H1 (cell line): ENCODE measurements at regions of chr11 and their contacts with region 1.

Region 1: GRCh38 chr11:19742588-19743292 is 30.1 kb downstream of the NAV2 start:
- DNase-seq: peak; percentile 49 to 84
- H3K4me3 ChIP-seq: no peak overlapping the region
- H3K27ac ChIP-seq: no peak overlapping the region
- H3K4me1 ChIP-seq: peaks cover 0 to 12% (median 3%) of the 10 kb centered on the region in 4 experiments; a peak in 2 of 7 replicates
- H3K27me3 ChIP-seq: no peaks in the 10 kb centered on the region
- CTCF ChIP-seq: peak; percentile 76 to 97 (median 91)
- EP300 ChIP-seq: no peak
- POLR2A ChIP-seq: no peak
- RAD21 ChIP-seq: peak; percentile 93 to 97

Region 2: DNA sequence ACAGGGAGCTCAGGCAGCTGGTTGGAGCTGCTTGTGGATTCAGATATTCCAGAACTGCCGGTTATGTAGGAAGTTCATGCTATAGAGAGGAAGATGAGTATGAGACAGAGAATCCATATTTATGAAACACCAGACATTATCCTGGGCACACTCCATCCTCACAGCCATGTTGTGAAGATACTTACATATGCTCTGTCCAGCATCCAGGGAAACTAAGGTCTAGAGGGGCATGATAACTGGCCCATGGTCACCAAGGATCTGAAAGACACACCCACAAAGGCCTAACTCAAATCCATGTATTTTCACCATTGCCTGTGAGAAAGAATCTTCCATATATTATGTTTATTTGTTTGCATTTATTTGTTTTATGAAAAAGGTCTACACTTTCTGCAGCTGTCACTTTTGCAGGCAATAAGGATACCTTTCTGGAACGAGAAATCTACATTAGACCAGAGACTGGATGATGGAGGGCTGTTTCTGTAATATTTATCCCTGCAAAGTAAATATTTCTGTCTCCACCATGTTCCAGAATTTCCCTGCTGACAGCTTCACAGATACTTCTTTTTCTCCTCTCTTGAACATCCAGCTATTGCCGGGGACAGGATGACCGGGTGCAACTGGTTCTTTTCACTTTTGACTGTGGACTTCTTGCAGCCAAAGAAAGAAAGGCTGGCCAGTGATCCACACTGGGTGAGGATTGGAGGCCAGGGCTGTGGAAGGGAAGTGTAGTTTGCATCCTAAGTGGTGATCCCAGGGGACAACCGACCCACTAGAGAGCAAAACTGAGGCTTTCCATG is 176.0 kb before region 1 on chr11:
- CTCF ChIA-PET with region 1: interaction called, 104 read pairs
- POLR2A ChIA-PET with region 1: no interaction called
- DNase-seq: no peak
- H3K4me3 ChIP-seq: no peak overlapping the region
- H3K27ac ChIP-seq: no peak overlapping the region
- H3K4me1 ChIP-seq: no peaks in the 10 kb centered on the region
- H3K27me3 ChIP-seq: no peaks in the 10 kb centered on the region; a peak in 1 of 7 replicates
- CTCF ChIP-seq: no peak
- EP300 ChIP-seq: no peak
- POLR2A ChIP-seq: no peak
- RAD21 ChIP-seq: no peak

Region 3: DNA sequence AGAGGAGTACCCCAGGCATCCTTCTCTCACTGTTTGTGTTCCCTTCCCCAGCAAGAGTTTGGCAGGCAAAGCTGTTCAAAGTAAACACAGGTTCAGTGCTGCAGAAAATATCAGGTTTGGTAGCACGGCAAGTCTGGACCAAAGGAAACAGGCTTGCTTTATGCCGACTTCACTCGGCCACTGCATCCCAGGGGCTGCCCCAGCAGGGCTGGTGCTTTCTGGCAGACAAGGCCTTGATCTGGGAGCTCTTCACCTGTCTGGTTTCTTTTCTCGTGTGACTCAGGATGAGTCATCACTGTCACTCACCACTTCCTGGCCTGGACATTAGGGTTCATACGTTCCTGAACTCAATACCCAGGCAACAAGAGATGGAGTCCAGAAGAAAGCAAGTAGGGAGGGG is 82.7 kb before region 1 on chr11:
- CTCF ChIA-PET with region 1: interaction called, 24 read pairs
- POLR2A ChIA-PET with region 1: no interaction called
- DNase-seq: no peak
- H3K4me3 ChIP-seq: no peak overlapping the region
- H3K27ac ChIP-seq: no peak overlapping the region
- H3K4me1 ChIP-seq: no peaks in the 10 kb centered on the region
- H3K27me3 ChIP-seq: no peaks in the 10 kb centered on the region
- CTCF ChIP-seq: no peak
- EP300 ChIP-seq: no peak
- POLR2A ChIP-seq: no peak
- RAD21 ChIP-seq: no peak

Region 4: GRCh38 chr11:19712281-19713220 is 30.2 kb before region 1 on chr11 and contains the start of gene NAV2:
- CTCF ChIA-PET with region 1: interaction called, 27 read pairs
- POLR2A ChIA-PET with region 1: no interaction called
- DNase-seq: peak; percentile 80 to 92
- H3K4me3 ChIP-seq: peak within 1 kb of the TSS; percentile 48 to 65 (median 54)
- H3K27ac ChIP-seq: peak within 1 kb of the TSS; percentile 69; the same call in 1 of the 2 replicates
- H3K4me1 ChIP-seq: peaks cover 0 to 13% (median 10%) of the 10 kb centered on the region in 4 experiments; a peak in 6 of 7 replicates
- H3K27me3 ChIP-seq: peaks cover 8 to 33% (median 29%) of the 10 kb centered on the region in 4 experiments
- CTCF ChIP-seq: no peak
- EP300 ChIP-seq: no peak; a peak in 1 of 3 replicates
- POLR2A ChIP-seq: peak; percentile 46 to 88
- RAD21 ChIP-seq: no peak
- total RNA-seq, gene NAV2: 66.9 and 73.6 TPM in 2 replicates

Region 5: DNA sequence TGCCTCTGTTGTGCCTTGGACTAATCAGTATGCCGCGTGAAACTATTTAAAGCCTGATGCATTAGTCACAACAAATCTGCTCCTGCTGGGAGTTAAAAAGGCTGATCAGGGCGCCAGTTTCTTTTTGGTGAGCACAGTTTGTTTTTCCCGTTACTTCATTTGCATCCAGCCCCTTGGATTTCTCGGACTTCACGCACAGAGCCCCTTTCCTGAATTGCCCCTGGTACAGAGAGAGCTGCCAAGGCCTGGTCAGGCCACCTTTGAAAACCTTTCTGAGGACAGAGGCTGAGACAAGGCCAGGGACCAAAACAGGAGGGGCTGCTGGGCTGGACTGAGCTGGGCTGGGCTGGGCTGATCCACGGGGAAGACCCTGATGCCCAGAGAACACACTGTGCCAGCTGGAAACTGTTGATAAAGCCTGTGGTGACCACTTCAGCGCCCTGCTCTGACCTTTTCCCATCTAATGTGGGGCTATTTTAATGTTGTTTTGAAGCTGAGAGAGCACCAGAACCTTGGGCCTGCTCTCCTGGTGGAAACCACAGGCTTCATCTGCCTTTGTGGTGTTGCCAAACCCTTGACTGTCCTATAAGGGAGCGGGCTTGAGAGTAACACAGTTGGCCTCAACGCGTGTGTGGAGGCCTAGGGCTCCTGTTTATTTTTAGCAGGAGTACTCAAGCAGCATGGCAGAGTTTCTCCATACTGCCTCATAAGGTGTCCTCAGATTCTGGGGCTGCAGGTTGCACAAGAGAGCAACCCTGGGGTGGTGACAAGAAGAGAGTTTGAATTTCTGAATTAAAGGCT is 14.1 kb after region 1 on chr11:
- CTCF ChIA-PET with region 1: interaction called, 27 read pairs
- POLR2A ChIA-PET with region 1: interaction called, 4 read pairs
- DNase-seq: no peak
- H3K4me3 ChIP-seq: no peak overlapping the region
- H3K27ac ChIP-seq: no peak overlapping the region
- H3K4me1 ChIP-seq: peaks cover 0 to 18% (median 11%) of the 10 kb centered on the region in 4 experiments; a peak in 6 of 7 replicates
- H3K27me3 ChIP-seq: no peaks in the 10 kb centered on the region
- CTCF ChIP-seq: no peak
- EP300 ChIP-seq: no peak
- POLR2A ChIP-seq: no peak
- RAD21 ChIP-seq: no peak

Region 6: GRCh38 chr11:19800162-19800561 is 57.4 kb after region 1 on chr11:
- CTCF ChIA-PET with region 1: interaction called, 42 read pairs
- POLR2A ChIA-PET with region 1: no interaction called
- DNase-seq: no peak
- H3K4me3 ChIP-seq: no peak overlapping the region
- H3K27ac ChIP-seq: no peak overlapping the region
- H3K4me1 ChIP-seq: peaks cover 8 to 49% (median 26%) of the 10 kb centered on the region in 4 experiments; a peak in 6 of 7 replicates
- H3K27me3 ChIP-seq: no peaks in the 10 kb centered on the region
- CTCF ChIP-seq: peak; percentile 35 to 54 (median 37)
- EP300 ChIP-seq: no peak
- POLR2A ChIP-seq: no peak
- RAD21 ChIP-seq: peak; percentile 64 to 75